ENCODE measurements at regions of chr18 and their contacts with region 1.

Region 1: DNA sequence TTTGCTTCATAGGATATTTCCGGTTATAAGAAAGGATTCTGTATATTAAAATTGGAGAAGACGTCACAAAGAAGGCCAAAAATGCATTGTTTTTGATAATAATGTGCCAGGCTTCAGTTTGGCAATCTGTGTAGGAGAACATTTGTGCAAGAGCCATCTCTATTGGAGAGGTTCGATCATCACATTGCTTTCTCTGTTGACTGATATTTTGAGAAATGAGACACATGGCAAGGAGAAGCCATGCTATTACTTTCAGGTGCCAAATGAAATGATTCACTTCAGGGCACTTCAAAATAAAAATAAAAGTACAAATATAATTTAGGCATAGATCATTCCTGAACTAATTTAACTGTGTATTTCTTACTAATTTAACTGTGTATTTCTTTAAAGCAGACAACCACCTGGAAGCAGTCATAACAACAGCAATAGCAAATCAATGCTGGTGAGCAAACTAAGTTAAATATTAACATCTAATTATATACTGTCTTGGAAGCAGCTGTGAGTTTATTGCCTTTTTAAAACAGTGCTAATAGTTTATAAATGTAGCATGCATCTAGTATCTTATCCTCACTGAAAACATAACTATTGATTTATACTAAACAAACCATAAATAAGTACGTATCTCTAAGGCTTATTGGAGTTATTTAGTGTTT is 50.2 kb upstream of the CHST9 start:
- DNase-seq: no peak
- ATAC-seq: no peak
- H3K4me3 ChIP-seq: no peak overlapping the region
- H3K27ac ChIP-seq: no peak overlapping the region
- H3K4me1 ChIP-seq: no peaks in the 10 kb centered on the region
- H3K27me3 ChIP-seq: no peaks in the 10 kb centered on the region

Region 2: DNA sequence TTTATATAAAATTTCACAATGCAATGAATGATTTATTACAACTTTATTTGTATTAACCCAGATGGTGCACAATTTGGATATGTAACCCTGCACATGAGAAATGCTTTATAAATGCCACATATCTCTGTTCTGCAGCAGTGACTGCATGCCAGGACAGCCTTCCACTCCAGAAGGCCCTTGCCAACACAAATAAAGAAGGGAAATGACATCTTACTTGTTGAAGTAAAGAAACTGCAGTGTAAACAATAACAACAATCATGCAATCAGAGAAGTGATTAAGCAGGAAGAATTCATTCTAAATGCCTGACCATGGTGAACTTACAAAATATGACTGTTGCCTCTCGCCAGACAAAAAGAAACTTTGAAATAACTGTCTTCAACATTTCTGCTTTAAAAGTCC is 79.7 kb after region 1 on chr18:
- intact Hi-C with region 1: loop called in 1 of 4 experiments (anchors 10 kb)
- DNase-seq: no peak
- ATAC-seq: peak in 1 of 2 donors; percentile 56
- H3K4me3 ChIP-seq: no peak overlapping the region
- H3K27ac ChIP-seq: no peak overlapping the region
- H3K4me1 ChIP-seq: no peaks in the 10 kb centered on the region
- H3K27me3 ChIP-seq: no peaks in the 10 kb centered on the region

Region 3: GRCh38 chr18:27942701-27943100 is 707.4 kb after region 1 on chr18:
- intact Hi-C with region 1: no loop called
- DNase-seq: no peak
- ATAC-seq: no peak
- H3K4me3 ChIP-seq: no peak overlapping the region
- H3K27ac ChIP-seq: no peak overlapping the region
- H3K4me1 ChIP-seq: no peaks in the 10 kb centered on the region
- H3K27me3 ChIP-seq: no peaks in the 10 kb centered on the region